HCT116 (cell line): ENCODE measurements at regions of chr10 and their contacts with region 1.

Region 1: DNA sequence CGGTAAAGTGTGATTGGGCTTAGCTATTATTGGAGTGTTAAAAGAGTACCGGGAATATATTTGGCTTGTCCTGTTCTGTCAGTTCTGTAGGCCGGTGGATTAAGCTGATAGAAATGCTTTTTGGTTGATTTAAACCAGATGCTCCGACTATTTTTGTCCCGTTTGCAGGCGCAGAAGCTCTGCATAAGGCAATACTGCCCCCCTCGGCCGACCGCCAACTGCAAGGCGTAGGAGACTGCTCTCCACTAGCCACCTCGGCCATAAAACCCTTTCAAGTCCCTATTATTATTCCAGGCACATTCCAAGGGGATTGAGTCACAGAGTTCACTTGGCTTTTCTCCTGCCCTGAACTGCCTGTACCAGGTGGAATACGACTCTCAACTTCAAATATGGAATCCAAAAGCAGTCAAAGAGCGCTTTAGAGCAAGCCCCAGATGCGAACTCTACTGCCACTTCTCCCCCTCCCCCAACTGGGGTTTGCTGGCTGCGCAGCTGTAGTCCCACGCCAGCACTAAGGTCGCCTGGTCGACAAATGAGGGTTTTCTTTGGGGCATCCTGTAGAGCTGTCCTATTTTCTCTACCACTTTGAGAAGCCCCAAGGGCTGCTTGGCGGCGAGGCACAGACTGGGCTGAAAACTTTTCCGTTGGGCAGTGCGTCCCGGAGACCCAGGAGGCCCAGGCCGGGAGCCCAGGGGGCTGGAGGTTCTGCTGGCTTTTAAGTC is 108.3 kb downstream of the REEP3 start:
- DNase-seq: peak; percentile 97
- ATAC-seq: peak; percentile 74
- H3K4me3 ChIP-seq: peak overlapping the region; percentile 46 to 59
- H3K27ac ChIP-seq: peak overlapping the region; percentile 94
- H3K4me1 ChIP-seq: peaks cover 38 to 48% of the 10 kb centered on the region in 2 experiments
- H3K27me3 ChIP-seq: no peaks in the 10 kb centered on the region
- CTCF ChIP-seq: peak; percentile 72 to 90 (median 87)
- POLR2A ChIP-seq: no peak
- RAD21 ChIP-seq: peak; percentile 95

Region 2: GRCh38 chr10:63166742-63167258 is 462.7 kb before region 1 on chr10:
- CTCF ChIA-PET with region 1: interaction called, 51 read pairs
- POLR2A ChIA-PET with region 1: no interaction called
- RAD21 ChIA-PET with region 1: interaction called, 5 to 7 read pairs
- intact Hi-C with region 1: loop called (anchors 1 kb)
- DNase-seq: peak; percentile 64
- ATAC-seq: peak; percentile 86
- H3K4me3 ChIP-seq: no peak overlapping the region
- H3K27ac ChIP-seq: no peak overlapping the region
- H3K4me1 ChIP-seq: no peaks in the 10 kb centered on the region
- H3K27me3 ChIP-seq: no peaks in the 10 kb centered on the region
- CTCF ChIP-seq: peak; percentile 71 to 74 (median 74)
- POLR2A ChIP-seq: no peak
- RAD21 ChIP-seq: peak; percentile 79

Region 3: DNA sequence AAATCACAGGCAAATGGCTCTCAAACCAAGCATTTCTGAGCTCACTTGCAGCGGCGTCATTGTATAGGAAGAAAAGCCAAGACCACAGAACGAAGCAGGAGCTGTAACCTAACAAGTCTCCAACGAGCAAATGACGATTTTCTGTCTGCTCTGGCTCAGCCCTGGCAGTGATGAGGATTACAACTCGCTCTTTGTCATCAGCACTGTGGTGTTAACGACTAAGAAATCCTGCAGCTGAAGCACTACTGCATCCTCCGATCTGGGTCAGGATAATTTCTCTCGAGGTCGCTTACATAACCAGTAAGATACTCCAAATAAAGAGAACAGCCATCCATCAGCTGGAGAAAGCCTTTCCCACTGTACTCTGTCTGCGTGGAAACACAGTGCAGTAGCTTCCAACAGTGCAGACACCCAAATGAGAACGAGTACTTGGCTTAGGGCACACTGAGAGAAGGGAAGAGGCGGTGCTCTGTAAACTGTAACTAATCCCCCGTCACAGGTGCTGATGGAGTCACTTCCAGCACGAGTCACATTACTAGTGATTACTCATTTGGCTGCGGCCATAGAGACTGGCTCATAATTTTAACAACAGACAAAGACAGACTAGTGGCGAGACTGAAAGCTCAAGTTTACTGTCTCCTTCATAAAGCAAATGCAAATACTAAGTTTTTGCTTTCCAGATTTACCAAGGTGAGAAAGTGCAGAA is 360.6 kb before region 1 on chr10:
- CTCF ChIA-PET with region 1: no interaction called
- POLR2A ChIA-PET with region 1: interaction called, 3 read pairs
- RAD21 ChIA-PET with region 1: no interaction called
- intact Hi-C with region 1: loop called (anchors 1 kb)
- DNase-seq: peak; percentile 94
- ATAC-seq: peak; percentile 93
- H3K4me3 ChIP-seq: peak overlapping the region; percentile 60 to 65
- H3K27ac ChIP-seq: peak overlapping the region; percentile 72
- H3K4me1 ChIP-seq: peaks cover 28 to 57% of the 10 kb centered on the region in 2 experiments
- H3K27me3 ChIP-seq: no peaks in the 10 kb centered on the region
- CTCF ChIP-seq: peak in 2 of 3 experiments; percentile 25 to 36; a peak in 3 of 6 replicates
- POLR2A ChIP-seq: peak; percentile 90
- RAD21 ChIP-seq: peak; percentile 33

Region 4: DNA sequence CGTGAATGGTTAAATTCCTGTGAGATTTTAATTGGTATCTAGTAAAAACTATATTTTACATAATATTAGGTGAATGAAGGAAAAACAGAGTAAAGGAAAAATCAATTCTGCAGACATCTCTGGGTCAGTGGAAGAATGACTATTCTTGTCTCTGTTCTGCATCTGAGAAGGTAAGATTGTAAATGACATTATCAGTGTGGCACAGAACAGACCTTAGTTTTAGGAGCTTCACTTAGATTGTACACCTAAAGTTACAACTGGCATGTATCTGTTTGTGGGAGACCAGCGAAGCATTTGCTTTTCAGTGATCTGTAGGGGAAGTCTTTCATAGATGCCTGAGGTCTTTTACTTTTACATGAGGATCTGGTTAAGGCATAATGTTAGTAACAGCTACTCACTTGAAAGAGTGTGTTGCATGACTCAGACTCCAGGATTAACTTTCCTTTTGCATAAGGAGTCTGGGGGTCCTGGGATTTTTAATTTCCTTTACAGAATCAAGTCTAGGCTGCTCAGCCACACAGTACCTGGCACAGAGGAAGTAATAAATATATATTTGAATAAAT is 220.0 kb before region 1 on chr10:
- CTCF ChIA-PET with region 1: no interaction called
- POLR2A ChIA-PET with region 1: no interaction called
- RAD21 ChIA-PET with region 1: no interaction called
- intact Hi-C with region 1: no loop called
- DNase-seq: no peak
- ATAC-seq: peak; percentile 20; the same call in 1 of the 2 replicates
- H3K4me3 ChIP-seq: no peak overlapping the region
- H3K27ac ChIP-seq: no peak overlapping the region
- H3K4me1 ChIP-seq: peaks cover 0 to 8% of the 10 kb centered on the region in 2 experiments; a peak in 1 of 4 replicates
- H3K27me3 ChIP-seq: no peaks in the 10 kb centered on the region
- CTCF ChIP-seq: no peak
- POLR2A ChIP-seq: no peak
- RAD21 ChIP-seq: no peak

Region 5: DNA sequence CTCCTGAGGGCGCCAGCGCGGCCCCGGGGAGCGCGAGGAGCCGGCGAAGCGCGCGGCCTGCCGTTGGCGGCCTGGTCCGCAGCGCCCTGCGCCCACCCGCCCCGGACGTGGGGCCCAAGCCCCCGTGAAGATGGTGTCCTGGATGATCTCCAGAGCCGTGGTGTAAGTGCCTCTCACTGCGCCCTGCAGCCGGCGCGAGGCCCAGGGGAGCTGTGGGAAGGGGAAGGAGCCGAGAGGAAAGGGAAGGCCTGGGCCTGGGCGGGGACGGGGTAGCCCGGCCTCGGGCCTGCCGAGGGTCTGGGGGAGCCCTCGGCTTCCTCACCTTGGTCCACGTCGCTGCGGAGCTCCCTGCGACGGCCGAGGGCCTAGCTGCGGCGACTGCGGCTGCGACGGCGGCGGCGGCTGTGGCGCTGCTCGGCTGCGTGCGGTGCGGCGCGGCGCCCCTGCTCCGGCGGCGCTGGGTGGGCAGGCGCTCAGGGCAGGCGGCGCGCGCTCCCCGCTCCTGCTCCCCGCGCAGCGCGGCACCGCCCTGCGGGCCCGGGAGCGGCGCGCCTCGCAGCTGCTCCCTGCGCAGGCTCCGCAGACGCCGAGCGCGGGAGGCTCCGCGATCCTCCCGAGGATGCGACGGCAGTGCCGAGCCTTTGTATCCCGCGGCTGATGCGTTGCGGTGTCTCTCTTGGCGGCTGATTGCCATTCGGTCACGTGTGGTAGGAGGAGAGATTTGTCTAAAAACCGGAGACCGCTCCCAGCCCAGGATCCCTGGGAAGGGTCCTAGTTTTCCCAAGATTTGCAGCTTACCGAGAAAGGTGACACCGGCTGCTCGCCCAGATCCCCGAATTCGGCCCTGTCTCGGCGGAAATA is 107.9 kb before region 1 on chr10:
- CTCF ChIA-PET with region 1: interaction called, 3 read pairs
- POLR2A ChIA-PET with region 1: interaction called, 4 read pairs
- RAD21 ChIA-PET with region 1: interaction called, 4 to 10 read pairs
- intact Hi-C with region 1: no loop called
- DNase-seq: no peak
- ATAC-seq: peak; percentile 74
- H3K4me3 ChIP-seq: peak overlapping the region; percentile 55 to 65
- H3K27ac ChIP-seq: peak overlapping the region; percentile 99
- H3K4me1 ChIP-seq: peaks cover 19 to 32% of the 10 kb centered on the region in 2 experiments; a peak in 3 of 4 replicates
- H3K27me3 ChIP-seq: no peaks in the 10 kb centered on the region
- CTCF ChIP-seq: no peak
- POLR2A ChIP-seq: peak; percentile 32
- RAD21 ChIP-seq: 0 out of 2 replicates have a peak, but pooled peaks have one; percentile 17

Region 6: GRCh38 chr10:63651864-63652263 is 22.3 kb after region 1 on chr10:
- CTCF ChIA-PET with region 1: no interaction called
- POLR2A ChIA-PET with region 1: no interaction called
- RAD21 ChIA-PET with region 1: no interaction called
- intact Hi-C with region 1: no loop called
- DNase-seq: no peak
- ATAC-seq: no peak
- H3K4me3 ChIP-seq: no peak overlapping the region
- H3K27ac ChIP-seq: no peak overlapping the region
- H3K4me1 ChIP-seq: no peaks in the 10 kb centered on the region
- H3K27me3 ChIP-seq: no peaks in the 10 kb centered on the region
- CTCF ChIP-seq: no peak
- POLR2A ChIP-seq: no peak
- RAD21 ChIP-seq: no peak

Region 7: GRCh38 chr10:63711867-63712716 is 82.6 kb after region 1 on chr10:
- CTCF ChIA-PET with region 1: interaction called, 4 read pairs
- POLR2A ChIA-PET with region 1: interaction called, 9 read pairs
- RAD21 ChIA-PET with region 1: interaction called, 4 read pairs
- intact Hi-C with region 1: loop called (anchors 2 kb)
- DNase-seq: peak; percentile 99
- ATAC-seq: peak; percentile 91
- H3K4me3 ChIP-seq: 0 out of 4 replicates have a peak overlapping the region, but pooled peaks of 1 of the 2 experiments have one; percentile 5
- H3K27ac ChIP-seq: peak overlapping the region; percentile 75
- H3K4me1 ChIP-seq: peaks cover 59 to 75% of the 10 kb centered on the region in 2 experiments
- H3K27me3 ChIP-seq: no peaks in the 10 kb centered on the region
- CTCF ChIP-seq: no peak
- POLR2A ChIP-seq: no peak
- RAD21 ChIP-seq: peak; percentile 36

Region 8: DNA sequence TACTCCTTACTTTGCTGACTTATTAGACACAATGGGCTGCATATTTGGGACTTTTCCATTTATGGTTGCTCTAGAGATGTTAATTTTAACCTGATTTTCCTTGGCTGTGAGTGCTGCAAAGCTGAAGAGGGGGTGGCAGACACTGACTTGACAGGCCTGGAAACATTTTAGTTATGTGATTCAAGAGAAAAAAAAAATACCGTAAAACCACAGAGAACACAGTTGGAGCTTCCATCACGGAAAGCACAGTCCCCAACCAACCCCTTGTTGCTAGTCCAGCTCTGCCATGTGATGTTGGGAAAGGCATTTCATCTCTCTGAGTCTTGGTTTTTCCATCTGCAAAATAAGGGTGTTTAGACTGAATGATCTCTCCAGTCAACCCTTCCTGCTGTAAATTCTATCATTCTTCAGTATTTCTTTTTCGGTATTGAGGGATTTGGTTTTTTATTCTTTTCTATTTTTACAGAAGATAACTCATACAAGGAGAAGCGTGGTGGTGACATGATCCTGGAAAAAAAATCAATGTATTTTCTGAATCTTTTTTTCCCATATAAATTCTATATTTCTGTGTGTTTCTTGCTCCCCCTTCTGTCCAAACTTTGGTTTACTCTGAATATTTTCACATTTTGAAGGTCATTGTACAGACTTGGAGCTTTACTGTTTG is 137.7 kb after region 1 on chr10:
- CTCF ChIA-PET with region 1: interaction called, 3 read pairs
- POLR2A ChIA-PET with region 1: no interaction called
- RAD21 ChIA-PET with region 1: no interaction called
- intact Hi-C with region 1: loop called (anchors 5 kb)
- DNase-seq: no peak
- ATAC-seq: peak; percentile 63; the same call in 1 of the 2 replicates
- H3K4me3 ChIP-seq: no peak overlapping the region
- H3K27ac ChIP-seq: no peak overlapping the region
- H3K4me1 ChIP-seq: no peaks in the 10 kb centered on the region
- H3K27me3 ChIP-seq: no peaks in the 10 kb centered on the region
- CTCF ChIP-seq: peak; percentile 37 to 68 (median 59)
- POLR2A ChIP-seq: no peak
- RAD21 ChIP-seq: peak; percentile 74

Region 9: DNA sequence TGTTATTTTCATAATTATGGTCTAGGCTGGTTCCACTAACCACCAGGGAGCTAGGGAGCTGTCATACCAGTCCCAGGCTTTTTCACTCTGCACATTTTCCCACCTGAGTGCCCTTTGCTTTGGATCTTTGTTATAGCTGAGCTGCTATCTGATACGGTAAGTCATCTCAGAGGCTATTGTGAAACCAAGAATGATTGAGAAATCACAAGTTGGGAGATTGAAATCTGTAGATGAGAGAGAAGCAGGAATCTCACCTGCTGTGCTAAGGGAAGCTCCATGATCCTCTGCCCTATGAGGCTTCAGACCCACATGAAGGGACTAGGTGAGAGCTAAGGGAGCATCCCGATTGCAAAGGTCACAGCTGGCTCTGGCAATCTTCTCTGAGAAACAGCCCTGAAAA is 199.5 kb after region 1 on chr10:
- CTCF ChIA-PET with region 1: no interaction called
- POLR2A ChIA-PET with region 1: no interaction called
- RAD21 ChIA-PET with region 1: no interaction called
- intact Hi-C with region 1: no loop called
- DNase-seq: no peak
- ATAC-seq: no peak
- H3K4me3 ChIP-seq: no peak overlapping the region
- H3K27ac ChIP-seq: no peak overlapping the region
- H3K4me1 ChIP-seq: no peaks in the 10 kb centered on the region
- H3K27me3 ChIP-seq: no peaks in the 10 kb centered on the region
- CTCF ChIP-seq: no peak
- POLR2A ChIP-seq: no peak
- RAD21 ChIP-seq: no peak